Psoas muscle (tissue), 8 donors: ENCODE measurements at regions of chr2 and their contacts with region 1.

Region 1: DNA sequence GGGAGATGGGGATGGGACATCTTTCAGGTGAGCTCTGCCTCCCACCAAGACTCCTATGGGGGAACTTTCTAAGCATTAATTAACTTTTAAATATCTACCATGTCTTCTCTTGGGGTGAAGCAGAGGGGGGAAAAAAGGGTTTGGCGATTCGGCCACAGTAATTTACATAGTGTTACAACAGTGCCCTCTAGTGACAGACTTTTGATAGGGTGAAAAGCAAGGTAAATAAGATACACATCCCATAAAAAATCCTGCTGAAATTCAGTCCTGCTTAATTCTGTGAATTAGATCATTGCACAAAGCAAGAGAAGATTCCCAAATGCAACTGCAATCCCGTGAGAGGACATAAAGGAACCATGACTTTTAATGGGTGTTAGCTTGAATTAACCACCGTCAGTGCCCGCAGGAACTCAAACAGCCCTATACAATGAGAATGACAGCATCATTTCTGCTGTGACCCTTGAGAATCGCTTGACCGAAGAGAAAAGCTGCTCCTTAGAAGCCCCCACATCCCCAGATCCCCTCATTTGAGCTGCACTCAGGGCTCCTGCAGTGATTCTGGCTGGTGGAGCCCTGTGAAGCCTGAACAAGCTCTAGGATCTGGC is 32.8 kb downstream of the FAM124B start:
- DNase-seq: no peak
- ATAC-seq: no peak
- H3K4me3 ChIP-seq: no peak overlapping the region
- H3K27ac ChIP-seq: no peak overlapping the region
- H3K4me1 ChIP-seq: no peaks in the 10 kb centered on the region
- H3K27me3 ChIP-seq: no peaks in the 10 kb centered on the region
- CTCF ChIP-seq: peak; percentile 59

Region 2: DNA sequence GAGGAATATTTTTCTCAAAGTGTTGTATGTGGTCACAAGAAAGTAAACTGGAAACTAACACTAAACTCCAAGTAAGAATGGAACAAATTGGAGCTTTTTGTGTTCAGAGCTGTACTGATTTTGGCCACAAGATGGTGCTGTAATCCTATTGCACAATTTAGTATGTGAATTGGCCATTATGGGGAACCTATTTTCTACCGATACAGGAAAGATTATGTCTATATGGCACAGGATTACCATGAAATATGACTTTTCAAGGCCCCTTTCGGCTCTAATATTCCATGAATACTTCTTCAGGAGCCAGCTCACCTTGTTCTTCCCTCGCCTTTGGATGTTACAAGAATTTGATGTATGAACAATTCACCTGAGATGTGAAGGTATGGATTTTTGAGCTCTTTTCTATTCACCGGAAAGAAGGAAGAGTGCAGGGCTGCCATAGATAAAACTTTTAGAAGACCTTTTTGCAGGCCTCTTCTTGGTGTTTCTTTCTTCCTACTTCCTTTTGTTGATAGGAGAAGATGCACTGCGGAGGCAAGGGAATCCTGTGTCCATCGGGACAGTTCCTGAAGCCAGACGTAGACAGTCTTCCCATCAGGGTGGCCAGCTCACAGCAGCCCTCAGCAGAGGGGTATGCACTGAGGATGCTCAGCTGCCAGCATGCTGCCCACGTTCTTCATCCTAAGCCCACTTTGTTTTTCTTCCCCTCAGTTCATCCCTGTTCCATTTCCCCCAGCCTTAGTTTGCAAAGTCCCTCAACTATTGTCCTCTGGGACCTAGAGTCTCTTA is 398.6 kb before region 1 on chr2:
- intact Hi-C with region 1: loop called in 1 of 2 experiments (anchors 5 kb)
- DNase-seq: no peak
- ATAC-seq: peak in 2 of 4 donors; percentile 60 to 79
- H3K4me3 ChIP-seq: no peak overlapping the region
- H3K27ac ChIP-seq: no peak overlapping the region
- H3K4me1 ChIP-seq: no peaks in the 10 kb centered on the region
- H3K27me3 ChIP-seq: no peaks in the 10 kb centered on the region
- CTCF ChIP-seq: peak; percentile 97

Region 3: DNA sequence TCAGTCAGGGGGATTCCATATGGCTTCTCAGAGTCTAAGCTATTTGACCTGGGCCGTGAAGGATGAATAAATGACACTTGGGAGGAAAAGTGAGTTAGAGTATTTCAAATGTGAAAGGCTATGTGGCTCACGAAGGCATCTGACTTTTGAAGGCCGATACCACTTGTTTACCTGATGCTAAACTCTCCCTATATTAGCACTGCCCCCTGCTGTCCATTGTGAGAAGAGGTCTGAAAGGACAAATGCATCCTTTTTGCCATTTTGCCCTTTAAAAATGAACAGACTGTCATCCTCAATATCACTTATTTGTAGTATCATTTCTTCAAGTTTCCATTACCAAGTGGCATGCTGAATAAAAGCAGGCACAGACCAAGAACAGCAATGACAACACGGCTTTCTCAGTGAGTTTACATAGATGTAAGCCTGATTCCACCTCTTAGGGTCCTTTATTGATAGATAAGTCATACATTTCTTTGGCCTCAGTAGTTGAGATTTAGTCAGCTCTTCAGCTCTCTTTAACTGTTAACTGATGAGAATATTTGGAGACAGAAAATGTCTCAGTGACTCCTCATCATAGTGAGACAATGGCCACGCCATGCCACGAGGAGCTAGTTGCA is 633.0 kb after region 1 on chr2:
- intact Hi-C with region 1: loop called in 1 of 2 experiments (anchors 10 kb)
- DNase-seq: no peak
- ATAC-seq: peak; percentile 44 to 83 (median 56)
- H3K4me3 ChIP-seq: no peak overlapping the region
- H3K27ac ChIP-seq: no peak overlapping the region
- H3K4me1 ChIP-seq: no peaks in the 10 kb centered on the region
- H3K27me3 ChIP-seq: no peaks in the 10 kb centered on the region
- CTCF ChIP-seq: peak; percentile 72